Panc1 (cell line): ENCODE measurements at regions of chr20 and their contacts with region 1.

Region 1: DNA sequence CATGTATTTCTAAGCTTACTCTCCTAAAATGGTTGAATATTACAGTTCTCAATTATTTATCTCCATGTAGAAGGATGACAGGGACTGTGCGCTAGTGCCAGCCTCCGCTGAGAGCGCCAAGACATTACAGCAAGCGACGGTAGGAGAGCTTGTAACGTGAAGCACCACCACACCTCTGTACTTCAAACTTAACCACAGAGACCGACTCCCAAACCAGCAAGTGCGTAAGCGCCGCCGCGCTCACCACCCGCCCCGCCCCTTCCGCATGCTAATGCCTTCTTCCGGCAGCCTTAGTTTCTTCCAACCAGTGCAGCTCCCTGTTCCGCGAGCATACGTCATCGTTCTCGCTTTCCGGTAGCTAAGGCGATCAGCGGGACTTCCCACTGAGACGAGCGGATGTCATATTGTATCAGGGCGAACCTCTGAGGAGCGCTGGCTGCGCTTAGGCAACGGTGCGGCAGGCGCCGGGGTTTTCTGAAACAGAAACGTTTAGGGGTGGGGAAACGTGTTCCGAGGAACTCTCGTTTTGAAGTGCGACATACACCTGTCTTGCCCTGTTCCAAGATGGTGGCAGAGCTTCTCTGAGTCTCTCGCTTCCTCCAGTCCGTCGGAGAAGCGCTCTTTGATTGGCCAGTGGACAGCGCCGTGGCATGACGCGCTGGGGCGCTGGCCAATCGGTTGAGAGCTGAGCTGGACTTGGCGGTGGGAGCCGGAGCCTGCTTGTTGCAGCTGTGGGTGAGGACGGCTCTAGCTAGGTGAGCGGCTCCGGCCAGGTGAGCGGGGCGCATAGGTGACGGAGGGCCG is at the start of gene SEC23B:
- DNase-seq: peak; percentile 93
- ATAC-seq: peak; percentile 99
- H3K4me3 ChIP-seq: peak within 1 kb of the TSS; percentile 86 to 97
- H3K27ac ChIP-seq: peak within 1 kb of the TSS; percentile 98
- H3K4me1 ChIP-seq: peaks cover 8% of the 10 kb centered on the region; the same call in 1 of the 2 replicates
- H3K27me3 ChIP-seq: no peaks in the 10 kb centered on the region
- CTCF ChIP-seq: no peak
- total RNA-seq, gene SEC23B: 61.3 TPM

Region 2: DNA sequence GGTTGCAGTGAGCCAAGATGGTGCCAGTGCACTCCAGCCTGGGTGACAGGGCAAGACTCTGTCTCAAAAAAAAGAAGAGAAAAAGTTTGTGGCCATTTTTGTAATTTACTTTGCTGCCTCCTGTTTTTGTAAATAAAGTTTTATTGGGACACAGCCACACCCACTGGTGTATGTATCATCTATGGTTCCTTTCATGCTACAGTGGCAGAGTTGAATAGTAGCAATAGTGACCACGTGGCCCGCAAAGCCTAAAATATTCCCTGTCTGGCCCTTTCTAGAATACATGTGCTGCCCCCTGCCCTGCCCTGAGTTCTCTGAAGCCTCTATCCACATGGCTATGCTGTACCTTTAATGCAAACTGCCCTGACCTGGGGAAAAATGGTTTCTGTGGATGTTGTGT is 294.4 kb before region 1 on chr20:
- CTCF ChIA-PET with region 1: no interaction called
- POLR2A ChIA-PET with region 1: no interaction called
- in situ Hi-C with region 1: no loop called
- intact Hi-C with region 1: no loop called
- DNase-seq: no peak
- ATAC-seq: no peak
- H3K4me3 ChIP-seq: no peak overlapping the region
- H3K27ac ChIP-seq: no peak overlapping the region
- H3K4me1 ChIP-seq: no peaks in the 10 kb centered on the region; the same call in 1 of the 2 replicates
- H3K27me3 ChIP-seq: no peaks in the 10 kb centered on the region
- CTCF ChIP-seq: no peak

Region 3: DNA sequence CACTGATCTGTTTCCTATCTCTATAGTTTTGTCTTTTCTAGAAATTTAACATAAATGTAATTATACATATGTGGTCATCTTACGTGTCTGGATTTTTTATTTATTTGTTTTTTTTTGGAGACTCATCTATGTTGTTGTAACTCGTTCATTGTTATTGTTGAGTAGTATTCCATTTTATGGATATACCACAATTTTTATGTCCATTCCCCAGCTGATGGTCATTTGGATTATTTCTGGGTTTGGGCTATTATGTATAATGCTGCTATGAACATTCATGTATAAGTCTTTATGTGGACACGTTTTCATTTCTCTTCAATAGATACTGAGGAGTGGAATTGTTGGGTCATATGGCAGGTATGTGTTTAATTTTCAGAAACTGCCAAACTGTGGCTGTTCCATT is 50.8 kb before region 1 on chr20:
- CTCF ChIA-PET with region 1: no interaction called
- POLR2A ChIA-PET with region 1: no interaction called
- in situ Hi-C with region 1: no loop called
- intact Hi-C with region 1: no loop called
- DNase-seq: no peak
- ATAC-seq: no peak
- H3K4me3 ChIP-seq: no peak overlapping the region
- H3K27ac ChIP-seq: no peak overlapping the region
- H3K4me1 ChIP-seq: no peaks in the 10 kb centered on the region
- H3K27me3 ChIP-seq: no peaks in the 10 kb centered on the region
- CTCF ChIP-seq: no peak

Region 4: DNA sequence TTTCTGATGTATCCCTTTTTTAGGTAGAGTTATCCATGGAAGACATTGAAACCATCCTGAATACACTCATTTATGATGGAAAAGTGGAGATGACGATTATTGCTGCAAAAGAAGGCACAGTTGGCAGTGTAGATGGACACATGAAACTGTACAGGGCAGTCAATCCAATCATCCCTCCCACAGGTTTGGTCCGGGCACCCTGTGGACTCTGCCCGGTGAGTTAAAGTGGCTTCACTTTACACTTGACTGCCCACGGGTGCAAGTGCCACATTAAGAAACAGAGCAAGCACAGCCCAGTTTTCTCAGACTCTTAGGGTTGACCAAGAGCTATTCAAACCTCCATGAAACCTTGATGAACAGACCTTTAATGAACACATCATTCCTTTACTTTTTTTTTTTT is 25.8 kb before region 1 on chr20:
- CTCF ChIA-PET with region 1: no interaction called
- POLR2A ChIA-PET with region 1: no interaction called
- in situ Hi-C with region 1: no loop called
- intact Hi-C with region 1: no loop called
- DNase-seq: no peak
- ATAC-seq: no peak
- H3K4me3 ChIP-seq: no peak overlapping the region
- H3K27ac ChIP-seq: no peak overlapping the region
- H3K4me1 ChIP-seq: no peaks in the 10 kb centered on the region
- H3K27me3 ChIP-seq: no peaks in the 10 kb centered on the region
- CTCF ChIP-seq: no peak

Region 5: DNA sequence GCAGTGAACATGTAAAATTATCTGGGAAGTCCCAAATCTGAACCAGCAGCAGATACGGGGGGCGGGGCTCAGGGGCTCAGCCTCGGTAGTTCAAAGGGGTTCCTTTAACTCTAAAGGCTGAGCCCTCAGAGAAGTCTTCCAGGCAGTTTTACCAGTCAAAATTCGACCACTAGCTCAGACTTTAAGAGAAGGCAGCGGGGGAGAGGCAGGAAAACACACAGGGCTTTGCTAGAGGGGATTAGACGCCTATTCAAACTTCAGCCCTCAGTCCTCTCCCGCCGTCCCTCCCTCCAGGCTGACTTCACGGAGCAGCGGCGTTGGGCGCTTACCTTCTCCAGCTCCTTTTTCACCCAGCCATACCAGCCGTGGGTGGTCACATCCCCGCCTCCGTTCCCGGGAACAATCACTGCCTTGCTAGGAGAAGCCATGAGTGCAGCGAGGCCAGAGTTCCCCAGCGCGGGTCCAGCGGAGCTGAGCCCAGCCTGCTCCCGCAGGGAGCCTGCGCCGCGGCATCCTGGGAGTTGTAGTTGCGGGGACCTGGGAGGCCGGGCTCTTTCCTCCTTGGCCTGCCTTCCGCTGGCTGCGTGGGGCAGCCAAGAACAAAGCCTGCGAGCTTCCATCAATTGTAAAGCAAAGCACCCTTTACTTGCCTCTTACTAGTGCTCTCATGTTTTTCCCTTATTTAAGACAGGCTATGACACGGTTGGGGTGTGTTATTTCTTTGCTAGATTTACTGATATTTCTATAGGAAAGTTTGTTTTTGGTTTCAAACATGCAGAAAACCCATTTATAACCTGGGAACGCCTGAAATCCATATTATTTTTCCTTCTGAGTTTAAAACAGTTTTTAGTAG is 10.5 kb before region 1 on chr20 and contains the start of gene RBBP9:
- CTCF ChIA-PET with region 1: no interaction called
- POLR2A ChIA-PET with region 1: interaction called, 17 read pairs
- in situ Hi-C with region 1: no loop called
- intact Hi-C with region 1: no loop called
- DNase-seq: peak; percentile 28
- ATAC-seq: peak; percentile 100
- H3K4me3 ChIP-seq: peak within 1 kb of the TSS; percentile 94 to 95
- H3K27ac ChIP-seq: peak within 1 kb of the TSS; percentile 84
- H3K4me1 ChIP-seq: peaks cover 8% of the 10 kb centered on the region; the same call in 1 of the 2 replicates
- H3K27me3 ChIP-seq: no peaks in the 10 kb centered on the region
- CTCF ChIP-seq: no peak
- total RNA-seq, gene RBBP9: 11.1 TPM

Region 6: DNA sequence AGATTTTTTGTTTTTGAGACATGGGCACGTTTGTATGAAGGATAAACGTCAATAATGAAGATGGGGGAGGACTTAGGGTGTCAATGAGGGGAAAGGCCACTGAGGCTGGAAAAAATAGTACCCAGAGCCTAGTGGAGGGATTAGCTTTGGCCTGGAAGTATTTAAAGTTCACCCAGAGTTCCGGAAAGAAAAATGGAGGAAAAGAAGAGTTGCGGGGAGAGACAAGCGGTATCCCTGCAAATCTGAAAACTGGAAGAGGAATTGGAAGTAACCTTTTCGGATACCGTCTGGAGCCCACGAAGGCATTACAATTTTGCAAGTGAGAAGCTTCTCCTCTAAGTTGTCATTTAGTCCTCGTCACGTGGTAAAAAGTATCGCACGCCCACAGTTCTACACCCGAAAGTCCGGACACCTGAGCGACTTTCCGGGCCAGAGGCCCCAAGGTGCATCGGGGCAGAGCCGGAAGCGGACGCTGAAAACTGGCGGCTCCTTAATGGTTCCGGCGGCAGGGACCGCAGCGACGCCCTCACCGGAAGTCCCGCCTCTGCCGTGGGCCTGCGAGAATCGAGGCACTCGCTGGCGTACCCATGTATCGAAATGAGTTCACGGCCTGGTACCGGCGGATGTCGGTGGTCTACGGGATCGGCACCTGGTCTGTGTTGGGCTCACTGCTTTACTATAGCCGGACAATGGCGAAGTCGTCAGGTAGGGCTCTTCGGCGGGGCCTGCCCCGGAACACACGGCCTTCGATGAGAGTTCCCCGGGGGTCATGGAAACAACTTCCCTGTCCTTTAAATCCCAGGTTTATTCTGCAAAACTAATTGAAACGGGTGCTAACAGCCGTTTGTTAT is 59.7 kb after region 1 on chr20 and contains the start of gene SMIM26:
- CTCF ChIA-PET with region 1: no interaction called
- POLR2A ChIA-PET with region 1: interaction called, 10 read pairs
- in situ Hi-C with region 1: no loop called
- intact Hi-C with region 1: no loop called
- DNase-seq: peak; percentile 87
- ATAC-seq: peak; percentile 100
- H3K4me3 ChIP-seq: peak within 1 kb of the TSS; percentile 84 to 90
- H3K27ac ChIP-seq: peak within 1 kb of the TSS; percentile 82
- H3K4me1 ChIP-seq: no peaks in the 10 kb centered on the region
- H3K27me3 ChIP-seq: no peaks in the 10 kb centered on the region
- CTCF ChIP-seq: no peak
- total RNA-seq, gene SMIM26: 54.6 TPM

Region 7: GRCh38 chr20:18793625-18794427 is 286.4 kb after region 1 on chr20:
- CTCF ChIA-PET with region 1: no interaction called
- POLR2A ChIA-PET with region 1: no interaction called
- in situ Hi-C with region 1: no loop called
- intact Hi-C with region 1: no loop called
- DNase-seq: peak; percentile 71
- ATAC-seq: peak; percentile 100
- H3K4me3 ChIP-seq: peak overlapping the region; percentile 77 to 79
- H3K27ac ChIP-seq: peak overlapping the region; percentile 85
- H3K4me1 ChIP-seq: peaks cover 4% of the 10 kb centered on the region; the same call in 1 of the 2 replicates
- H3K27me3 ChIP-seq: peaks cover 6% of the 10 kb centered on the region
- CTCF ChIP-seq: no peak

Region 8: DNA sequence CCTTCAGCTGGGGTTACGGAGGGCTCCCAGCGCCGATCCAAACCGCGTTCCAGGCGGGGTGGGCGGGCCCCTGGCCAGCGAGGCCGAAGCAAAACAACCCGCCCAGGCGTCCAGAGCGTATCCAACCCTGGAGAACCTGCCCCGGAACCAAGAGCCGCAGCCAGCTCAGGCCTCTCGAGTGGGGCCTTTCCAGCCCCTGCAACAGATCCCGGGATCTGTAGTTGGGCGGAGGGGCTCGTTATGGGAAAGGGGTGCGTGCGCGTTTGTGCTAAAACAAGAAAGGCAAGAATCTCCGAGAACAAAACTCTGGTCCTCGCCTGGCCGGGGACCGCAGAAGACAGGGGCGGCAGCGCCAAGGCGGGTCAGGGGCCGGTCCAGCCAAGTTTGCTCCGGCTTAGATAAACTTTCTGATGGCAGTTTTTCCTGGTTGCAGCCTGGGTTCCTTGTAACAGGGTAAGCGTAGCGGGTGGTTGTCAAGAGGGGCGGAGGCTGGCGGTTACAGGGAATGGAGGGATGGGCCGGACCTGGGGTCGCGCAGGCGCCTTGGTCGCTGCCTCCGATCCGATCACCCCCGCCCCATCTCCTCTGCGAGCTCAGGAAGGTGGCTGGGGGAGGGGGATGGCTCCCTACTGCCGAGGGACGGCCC is 1250.2 kb after region 1 on chr20:
- CTCF ChIA-PET with region 1: no interaction called
- POLR2A ChIA-PET with region 1: interaction called, 11 read pairs
- in situ Hi-C with region 1: no loop called
- intact Hi-C with region 1: no loop called
- DNase-seq: peak; percentile 66
- ATAC-seq: peak; percentile 92
- H3K4me3 ChIP-seq: peak overlapping the region; percentile 88 to 91
- H3K27ac ChIP-seq: peak overlapping the region; percentile 93
- H3K4me1 ChIP-seq: peaks cover 23% of the 10 kb centered on the region
- H3K27me3 ChIP-seq: no peaks in the 10 kb centered on the region
- CTCF ChIP-seq: no peak